ENCODE measurements at regions of chr17 and their contacts with region 1.

Region 1: GRCh38 chr17:20141198-20141972 is 132.2 kb downstream of the SPECC1 start:
- DNase-seq: no peak

Region 2: DNA sequence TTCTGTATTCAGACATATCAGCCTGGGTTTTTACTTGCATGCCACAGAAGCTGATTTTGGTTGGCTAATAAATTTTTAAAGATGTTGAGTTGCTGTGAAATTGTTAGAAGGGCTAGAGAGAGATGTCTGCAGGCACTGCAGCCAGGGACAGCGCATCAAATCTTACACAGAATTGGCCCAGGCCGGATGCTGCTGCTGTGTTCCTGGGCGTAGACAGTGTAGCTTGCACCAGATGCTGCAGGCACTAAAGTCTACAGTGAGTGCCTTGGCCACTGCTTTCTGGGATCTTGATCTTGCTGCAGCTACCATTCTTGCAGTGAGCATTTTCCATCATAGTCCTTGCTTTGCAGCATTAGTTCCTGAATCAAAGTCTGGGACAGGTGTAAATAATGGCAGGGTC is 37.7 kb after region 1 on chr17:
- intact Hi-C with region 1: no loop called
- DNase-seq: no peak

Region 3: GRCh38 chr17:20823905-20824304 is 682.5 kb after region 1 on chr17:
- intact Hi-C with region 1: loop called in 1 of 2 experiments (anchors 10 kb)
- DNase-seq: no peak

Measured in posterior vena cava (tissue), 2 donors.